Naive thymus-derived CD4-positive, alpha-beta T cell (primary cell): ENCODE measurements at regions of chrX and their contacts with region 1.

Region 1: GRCh38 chrX:1591102-1591900 is at the start of gene AKAP17A:
- DNase-seq: peak; percentile 92 to 100 (median 99)
- ATAC-seq: peak; percentile 95
- H3K4me3 ChIP-seq: peak within 1 kb of the TSS; percentile 76
- H3K4me3 Mint-ChIP-seq: peak within 1 kb of the TSS; percentile 85 to 97 (median 91)
- H3K27ac ChIP-seq: peak within 1 kb of the TSS; percentile 91
- H3K27ac Mint-ChIP-seq: peak within 1 kb of the TSS; percentile 82 to 94 (median 91)
- H3K4me1 ChIP-seq: peaks cover 7 to 10% of the 10 kb centered on the region in 2 donors
- H3K4me1 Mint-ChIP-seq: peaks cover 5 to 50% (median 34%) of the 10 kb centered on the region in 7 donors
- H3K27me3 ChIP-seq: no peaks in the 10 kb centered on the region
- H3K27me3 Mint-ChIP-seq: no peaks in the 10 kb centered on the region
- total RNA-seq, gene AKAP17A: 75.7 to 165 (median 125) TPM

Region 2: DNA sequence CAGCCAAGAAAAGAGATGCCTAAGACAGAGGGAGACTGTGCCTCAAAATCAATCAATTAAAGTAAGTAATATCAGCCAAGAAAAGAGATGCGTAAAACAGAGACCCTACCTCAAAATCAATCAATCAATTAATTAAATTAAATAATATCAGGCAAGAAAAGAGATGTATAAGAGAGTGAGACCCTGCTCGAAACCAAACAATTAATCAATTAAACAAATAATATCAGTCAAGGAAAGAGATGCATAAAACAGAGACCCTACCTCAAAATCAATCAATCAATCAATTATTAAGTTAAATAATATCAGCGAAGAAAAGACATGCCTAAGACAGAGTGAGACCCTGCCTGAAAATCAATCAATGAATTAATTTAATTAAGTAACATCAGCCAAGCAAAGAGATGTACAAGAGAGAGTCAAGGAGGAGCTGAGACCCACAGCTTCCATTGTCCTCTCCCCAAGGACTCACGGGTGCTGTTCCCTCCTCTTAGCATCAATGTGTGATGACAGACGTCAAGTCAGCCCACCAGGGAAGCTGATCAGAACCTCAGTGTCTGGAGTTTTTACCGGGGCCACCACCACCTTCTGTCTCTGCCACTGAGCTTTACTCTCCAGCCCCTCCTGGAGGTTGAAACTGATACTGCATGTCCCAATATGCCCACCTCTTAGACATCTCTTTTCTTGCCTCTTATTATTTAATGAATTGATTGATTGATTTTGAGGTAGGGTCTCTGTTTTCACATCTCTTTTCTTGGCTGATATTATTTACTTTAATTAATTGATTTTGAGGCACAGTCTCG is 10.4 kb before region 1 on chrX:
- CTCF ChIA-PET with region 1: no interaction called
- POLR2A ChIA-PET with region 1: no interaction called
- intact Hi-C with region 1: loop called in 1 of 2 experiments (anchors 1 kb)
- DNase-seq: peak; percentile 42 to 75 (median 67)
- ATAC-seq: peak; percentile 89
- H3K4me3 ChIP-seq: no peak overlapping the region
- H3K4me3 Mint-ChIP-seq: peak overlapping the region in 5 of 10 donors; percentile 16 to 60 (median 50)
- H3K27ac ChIP-seq: no peak overlapping the region
- H3K27ac Mint-ChIP-seq: peak overlapping the region in 7 of 9 donors; percentile 11 to 83 (median 57)
- H3K4me1 ChIP-seq: peaks cover 33 to 36% of the 10 kb centered on the region in 2 donors
- H3K4me1 Mint-ChIP-seq: peaks cover 17 to 36% (median 28%) of the 10 kb centered on the region in 7 donors
- H3K27me3 ChIP-seq: no peaks in the 10 kb centered on the region
- H3K27me3 Mint-ChIP-seq: no peaks in the 10 kb centered on the region

Region 3: GRCh38 chrX:1618689-1619088 is 27.4 kb after region 1 on chrX:
- CTCF ChIA-PET with region 1: no interaction called
- POLR2A ChIA-PET with region 1: no interaction called
- intact Hi-C with region 1: loop called in 1 of 2 experiments (anchors 2 kb)
- DNase-seq: no peak
- ATAC-seq: no peak
- H3K4me3 ChIP-seq: no peak overlapping the region
- H3K4me3 Mint-ChIP-seq: no peak overlapping the region
- H3K27ac ChIP-seq: no peak overlapping the region
- H3K27ac Mint-ChIP-seq: peak overlapping the region in 2 of 9 donors; percentile 72 to 78
- H3K4me1 ChIP-seq: peaks cover 0 to 11% of the 10 kb centered on the region in 2 donors
- H3K4me1 Mint-ChIP-seq: peaks cover 4 to 16% (median 9%) of the 10 kb centered on the region in 7 donors
- H3K27me3 ChIP-seq: no peaks in the 10 kb centered on the region
- H3K27me3 Mint-ChIP-seq: no peaks in the 10 kb centered on the region